GM12878 (cell line): ENCODE measurements at regions of chr1 and their contacts with region 1.

Region 1: GRCh38 chr1:224392411-224393249 is 36.0 kb downstream of the CNIH4 start:
- DNase-seq: no peak
- ATAC-seq: no peak
- H3K4me3 ChIP-seq: no peak overlapping the region
- H3K27ac ChIP-seq: no peak overlapping the region
- H3K4me1 ChIP-seq: no peaks in the 10 kb centered on the region
- H3K27me3 ChIP-seq: no peaks in the 10 kb centered on the region
- CTCF ChIP-seq: no peak
- EP300 ChIP-seq: no peak
- POLR2A ChIP-seq: no peak
- RAD21 ChIP-seq: no peak

Region 2: DNA sequence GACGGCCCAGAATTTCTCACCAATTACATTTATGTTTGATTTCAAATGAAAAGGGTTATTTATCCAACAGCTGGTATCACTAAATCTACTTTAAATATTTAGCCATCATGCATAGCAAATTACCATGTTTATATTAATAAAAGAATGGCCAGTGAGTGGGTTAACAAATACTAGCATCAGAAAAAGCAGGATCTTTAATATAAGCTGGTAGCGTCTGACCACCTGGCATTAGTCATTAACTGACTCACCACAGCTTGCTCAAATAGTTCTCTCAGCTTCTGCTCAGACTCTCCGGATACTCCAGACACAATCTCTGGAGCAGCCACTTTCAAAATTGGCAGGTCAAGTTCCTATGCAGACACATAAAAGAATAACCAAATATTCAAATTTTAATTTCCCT is 92.3 kb before region 1 on chr1:
- CTCF ChIA-PET with region 1: no interaction called
- POLR2A ChIA-PET with region 1: no interaction called
- RAD21 ChIA-PET with region 1: no interaction called
- SMC1A ChIA-PET with region 1: no interaction called
- in situ Hi-C with region 1: no loop called
- intact Hi-C with region 1: no loop called
- DNase-seq: no peak
- ATAC-seq: no peak
- H3K4me3 ChIP-seq: no peak overlapping the region
- H3K27ac ChIP-seq: no peak overlapping the region
- H3K4me1 ChIP-seq: no peaks in the 10 kb centered on the region
- H3K27me3 ChIP-seq: no peaks in the 10 kb centered on the region
- CTCF ChIP-seq: no peak
- EP300 ChIP-seq: no peak
- POLR2A ChIP-seq: no peak
- RAD21 ChIP-seq: no peak

Region 3: GRCh38 chr1:224404916-224405603 is 12.4 kb after region 1 on chr1:
- CTCF ChIA-PET with region 1: interaction called, 3 read pairs
- POLR2A ChIA-PET with region 1: interaction called, 4 read pairs
- RAD21 ChIA-PET with region 1: no interaction called
- SMC1A ChIA-PET with region 1: interaction called, 11 read pairs
- in situ Hi-C with region 1: no loop called
- intact Hi-C with region 1: no loop called
- DNase-seq: no peak
- ATAC-seq: no peak
- H3K4me3 ChIP-seq: no peak overlapping the region
- H3K27ac ChIP-seq: no peak overlapping the region
- H3K4me1 ChIP-seq: no peaks in the 10 kb centered on the region
- H3K27me3 ChIP-seq: no peaks in the 10 kb centered on the region
- CTCF ChIP-seq: no peak
- EP300 ChIP-seq: no peak
- POLR2A ChIP-seq: no peak
- RAD21 ChIP-seq: no peak

Region 4: GRCh38 chr1:224592636-224593582 is 200.3 kb after region 1 on chr1:
- CTCF ChIA-PET with region 1: no interaction called
- POLR2A ChIA-PET with region 1: no interaction called
- RAD21 ChIA-PET with region 1: no interaction called
- SMC1A ChIA-PET with region 1: no interaction called
- in situ Hi-C with region 1: no loop called
- intact Hi-C with region 1: no loop called
- DNase-seq: no peak
- ATAC-seq: peak; percentile 81
- H3K4me3 ChIP-seq: no peak overlapping the region
- H3K27ac ChIP-seq: no peak overlapping the region
- H3K4me1 ChIP-seq: no peaks in the 10 kb centered on the region
- H3K27me3 ChIP-seq: no peaks in the 10 kb centered on the region
- CTCF ChIP-seq: no peak
- EP300 ChIP-seq: no peak
- POLR2A ChIP-seq: no peak
- RAD21 ChIP-seq: no peak